ENCODE measurements at regions of chr11 and their contacts with region 1.

Region 1: GRCh38 chr11:7892840-7893254 is 38.2 kb downstream of the OR10A6 start:
- DNase-seq: no peak
- H3K4me3 Mint-ChIP-seq: no peak overlapping the region
- H3K27ac Mint-ChIP-seq: no peak overlapping the region
- H3K4me1 Mint-ChIP-seq: no peaks in the 10 kb centered on the region
- H3K27me3 Mint-ChIP-seq: peaks cover 3% of the 10 kb centered on the region

Region 2: DNA sequence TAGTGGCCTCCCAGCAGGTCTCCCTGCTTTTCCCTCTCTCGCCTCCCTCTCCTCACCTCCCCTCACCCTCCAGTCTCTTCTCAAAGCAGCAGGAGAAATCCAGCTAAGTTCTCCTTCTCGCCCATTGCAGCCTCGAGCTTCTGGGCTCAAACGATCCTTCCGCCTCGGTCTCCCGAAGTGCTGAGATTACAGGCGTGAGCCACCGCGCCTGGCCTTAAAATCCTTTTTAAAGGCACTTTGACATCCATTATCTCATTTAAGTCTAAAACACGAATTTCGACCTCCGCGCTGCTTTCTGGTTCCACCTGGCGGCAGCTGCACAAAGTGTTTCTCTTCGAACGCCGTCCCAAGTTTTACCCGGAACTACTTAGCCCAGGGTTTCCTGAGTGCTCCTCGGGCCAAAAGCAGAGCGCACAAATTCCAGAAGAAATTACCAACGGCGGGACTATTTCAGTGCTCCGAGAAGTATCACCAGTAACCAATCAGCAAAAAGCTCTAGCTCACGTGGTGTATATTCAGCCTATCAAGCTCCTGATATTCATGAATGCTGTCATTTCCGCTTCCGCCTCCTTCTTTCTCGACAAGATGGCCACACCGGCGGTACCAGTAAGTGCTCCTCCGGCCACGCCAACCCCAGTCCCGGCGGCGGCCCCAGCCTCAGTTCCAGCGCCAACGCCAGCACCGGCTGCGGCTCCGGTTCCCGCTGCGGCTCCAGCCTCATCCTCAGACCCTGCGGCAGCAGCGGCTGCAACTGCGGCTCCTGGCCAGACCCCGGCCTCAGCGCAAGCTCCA is 94.1 kb after region 1 on chr11 and contains the start of gene EIF3F:
- intact Hi-C with region 1: loop called (anchors 1 kb)
- DNase-seq: peak; percentile 91
- H3K4me3 Mint-ChIP-seq: peak within 1 kb of the TSS; percentile 99
- H3K27ac Mint-ChIP-seq: peak within 1 kb of the TSS; percentile 93
- H3K4me1 Mint-ChIP-seq: peaks cover 39% of the 10 kb centered on the region
- H3K27me3 Mint-ChIP-seq: peaks cover 2% of the 10 kb centered on the region
- total RNA-seq, gene EIF3F: 210 and 214 TPM in 2 replicates

Region 3: GRCh38 chr11:8099291-8099899 is 206.5 kb after region 1 on chr11:
- intact Hi-C with region 1: loop called (anchors 1 kb)
- DNase-seq: peak; percentile 43
- H3K4me3 Mint-ChIP-seq: no peak overlapping the region
- H3K27ac Mint-ChIP-seq: no peak overlapping the region
- H3K4me1 Mint-ChIP-seq: no peaks in the 10 kb centered on the region
- H3K27me3 Mint-ChIP-seq: no peaks in the 10 kb centered on the region